ENCODE measurements at regions of chr2 and their contacts with region 1.

Region 1: DNA sequence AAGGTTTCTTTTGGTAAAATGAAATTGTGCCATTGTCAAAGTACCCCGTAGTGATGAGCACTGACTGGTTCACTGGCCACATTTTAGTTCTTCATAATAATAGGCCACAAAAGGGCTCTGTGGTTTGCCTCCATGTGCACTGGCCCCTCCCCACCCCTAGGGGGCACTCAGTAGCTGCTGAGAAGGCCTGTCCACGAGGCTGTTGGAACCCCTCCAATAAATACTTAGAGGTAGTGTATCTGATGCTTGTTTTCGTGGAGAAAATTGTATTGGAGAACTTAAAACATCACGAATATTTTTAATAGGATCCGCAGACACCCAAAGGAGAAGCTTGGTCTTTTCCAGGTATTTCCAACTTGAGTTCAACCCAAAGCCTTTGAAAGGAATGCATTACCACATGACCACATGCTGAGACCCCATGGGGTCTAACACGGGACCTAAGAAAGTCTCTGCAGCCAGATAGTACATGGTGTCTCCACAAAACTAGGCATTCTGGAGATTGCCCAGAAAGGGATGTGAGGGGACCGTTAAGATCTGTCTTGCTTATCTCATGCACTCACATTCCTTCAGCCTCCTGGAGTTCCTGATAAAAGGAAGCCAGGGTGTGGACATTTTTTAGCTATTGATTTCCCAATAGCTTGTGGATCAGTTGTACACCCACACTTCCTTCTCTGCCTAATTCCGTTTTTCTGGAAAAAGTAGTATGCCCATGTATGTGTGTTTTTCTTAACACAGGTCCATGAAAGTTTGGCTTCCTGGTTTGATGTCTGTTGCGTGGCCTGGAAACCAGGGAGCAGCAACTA is 28.5 kb upstream of the NOSTRIN start:
- DNase-seq: peak; percentile 52 to 74 (median 70)
- ATAC-seq: peak; percentile 94
- H3K4me3 ChIP-seq: no peak overlapping the region
- H3K4me1 ChIP-seq: no peaks in the 10 kb centered on the region
- CTCF ChIP-seq: peak; percentile 65

Region 2: DNA sequence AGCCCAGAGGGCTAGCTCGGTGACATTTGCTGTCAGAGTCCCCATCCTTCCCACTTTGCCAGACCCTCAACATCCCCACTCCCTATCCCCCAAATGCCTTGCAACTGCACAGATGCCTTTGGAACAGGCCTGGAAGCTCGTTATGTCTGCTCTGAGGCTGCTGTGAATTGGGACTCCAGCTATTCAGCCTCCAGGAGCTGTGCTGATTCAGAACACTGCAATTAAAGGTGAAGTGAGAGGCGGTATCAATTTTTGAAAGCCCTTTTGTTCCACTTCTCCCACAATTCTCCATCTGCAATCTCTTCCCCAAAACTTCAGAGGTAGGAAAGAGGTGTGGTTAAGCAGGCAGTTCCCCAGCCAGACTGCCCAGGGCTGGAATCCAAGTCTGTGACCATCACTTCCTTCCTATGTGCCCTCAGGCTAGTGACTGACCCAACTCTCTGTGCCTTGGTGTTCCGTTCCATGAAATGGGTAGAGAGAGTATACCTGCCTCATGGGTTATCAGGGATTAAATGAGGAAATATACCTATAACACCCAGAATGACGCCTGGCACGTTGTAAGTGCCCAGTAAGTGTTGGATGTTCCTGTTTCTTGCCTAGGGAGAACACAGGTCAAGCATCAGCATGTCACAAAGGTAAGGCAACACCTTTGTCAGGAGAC is 46.0 kb after region 1 on chr2:
- intact Hi-C with region 1: loop called in 1 of 2 experiments (anchors 10 kb)
- DNase-seq: no peak
- ATAC-seq: peak; percentile 19
- H3K4me3 ChIP-seq: no peak overlapping the region
- H3K4me1 ChIP-seq: no peaks in the 10 kb centered on the region
- CTCF ChIP-seq: no peak

Region 3: DNA sequence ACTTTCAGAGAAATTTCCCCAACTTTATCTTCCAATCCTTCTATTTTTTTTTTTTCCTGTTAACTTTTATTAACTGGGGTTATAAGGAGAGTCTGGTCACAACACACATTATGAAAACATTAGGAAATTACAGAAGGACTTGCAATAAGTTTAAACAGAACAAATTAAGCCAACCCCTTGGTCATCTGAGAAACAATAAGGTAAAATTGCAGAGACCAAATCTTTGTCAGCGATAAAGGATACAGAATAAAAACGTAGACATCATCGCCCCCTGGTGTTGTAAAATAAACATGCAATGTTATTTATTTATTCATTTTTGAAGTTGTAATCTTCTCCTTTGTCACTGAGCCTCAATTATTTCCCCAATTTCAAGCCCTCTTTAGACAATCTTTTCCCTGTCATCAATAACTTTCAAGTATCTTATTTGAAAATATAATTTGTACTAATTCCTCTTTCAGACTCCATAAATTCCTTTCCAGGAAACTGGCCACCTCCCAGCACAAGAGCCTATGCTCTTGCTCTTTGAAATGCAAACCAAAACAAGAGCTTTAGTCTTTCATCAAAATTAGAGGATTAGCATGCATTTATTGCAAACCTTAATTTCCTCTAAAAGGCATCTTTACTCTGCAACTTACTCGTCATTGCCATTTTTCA is 146.7 kb after region 1 on chr2:
- intact Hi-C with region 1: loop called in 1 of 2 experiments (anchors 5 kb)
- DNase-seq: peak in 1 of 3 donors; percentile 40
- ATAC-seq: peak; percentile 44
- H3K4me3 ChIP-seq: no peak overlapping the region
- H3K4me1 ChIP-seq: no peaks in the 10 kb centered on the region
- CTCF ChIP-seq: peak; percentile 17